Calu3 (cell line): ENCODE measurements at regions of chr7 and their contacts with region 1.

Region 1: GRCh38 chr7:66246549-66247171 is 41.5 kb downstream of the TPST1 start:
- DNase-seq: no peak
- H3K4me3 Mint-ChIP-seq: no peak overlapping the region
- H3K27ac Mint-ChIP-seq: no peak overlapping the region
- H3K4me1 Mint-ChIP-seq: peaks cover 13% of the 10 kb centered on the region
- H3K27me3 Mint-ChIP-seq: no peaks in the 10 kb centered on the region
- CTCF ChIP-seq: no peak

Region 2: DNA sequence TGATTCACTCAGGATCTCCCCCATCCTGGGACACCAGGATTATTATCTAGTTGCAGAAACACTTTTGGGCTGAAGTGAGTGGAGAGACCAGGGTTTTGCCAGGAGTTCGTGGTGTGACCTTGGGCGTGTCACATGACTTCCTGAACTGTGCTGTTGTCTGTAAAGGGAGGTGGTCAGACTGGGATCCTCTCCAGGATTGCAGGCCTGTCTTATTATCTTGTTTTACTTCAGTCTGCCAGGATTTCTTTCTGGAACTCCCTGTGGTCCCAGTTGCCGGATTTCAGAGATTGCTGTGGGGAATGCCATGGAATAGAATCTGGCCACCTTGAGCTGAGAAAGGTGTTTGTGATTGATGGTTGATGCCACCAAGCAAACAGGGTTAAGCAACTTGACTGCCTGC is 96.2 kb before region 1 on chr7:
- CTCF ChIA-PET with region 1: interaction called, 10 read pairs
- intact Hi-C with region 1: no loop called
- DNase-seq: no peak
- H3K4me3 Mint-ChIP-seq: no peak overlapping the region
- H3K27ac Mint-ChIP-seq: no peak overlapping the region
- H3K4me1 Mint-ChIP-seq: no peaks in the 10 kb centered on the region
- H3K27me3 Mint-ChIP-seq: no peaks in the 10 kb centered on the region
- CTCF ChIP-seq: no peak